ENCODE measurements at regions of chr15 and their contacts with region 1.

Region 1: GRCh38 chr15:68875377-68876116 is 54.8 kb upstream of the SPESP1 start:
- DNase-seq: peak; percentile 90 to 93 (median 93)
- ATAC-seq: peak; percentile 93 to 97 (median 97)
- H3K4me3 ChIP-seq: peak overlapping the region; percentile 35 to 51 (median 39)
- H3K27ac ChIP-seq: no peak overlapping the region
- H3K4me1 ChIP-seq: peaks cover 0 to 5% (median 0%) of the 10 kb centered on the region in 4 donors
- H3K27me3 ChIP-seq: no peaks in the 10 kb centered on the region
- CTCF ChIP-seq: peak; percentile 75 to 92 (median 88)
- POLR2A ChIP-seq: no peak

Region 2: GRCh38 chr15:68328443-68328842 is 547.1 kb before region 1 on chr15:
- intact Hi-C with region 1: no loop called
- DNase-seq: no peak
- ATAC-seq: no peak
- H3K4me3 ChIP-seq: no peak overlapping the region
- H3K27ac ChIP-seq: no peak overlapping the region
- H3K4me1 ChIP-seq: no peaks in the 10 kb centered on the region
- H3K27me3 ChIP-seq: no peaks in the 10 kb centered on the region
- CTCF ChIP-seq: no peak
- POLR2A ChIP-seq: no peak

Region 3: GRCh38 chr15:68559345-68560310 is 315.9 kb before region 1 on chr15:
- intact Hi-C with region 1: loop called in 1 of 2 experiments (anchors 5 kb)
- DNase-seq: peak; percentile 80 to 83 (median 82)
- ATAC-seq: peak; percentile 95 to 98 (median 98)
- H3K4me3 ChIP-seq: peak overlapping the region in 2 of 3 donors; percentile 2 to 28
- H3K27ac ChIP-seq: no peak overlapping the region
- H3K4me1 ChIP-seq: peaks cover 0 to 7% (median 1%) of the 10 kb centered on the region in 4 donors
- H3K27me3 ChIP-seq: no peaks in the 10 kb centered on the region
- CTCF ChIP-seq: peak; percentile 90 to 98 (median 96)
- POLR2A ChIP-seq: no peak

Region 4: GRCh38 chr15:68719672-68720071 is 155.9 kb before region 1 on chr15:
- intact Hi-C with region 1: loop called (anchors 10 kb)
- DNase-seq: no peak
- ATAC-seq: no peak
- H3K4me3 ChIP-seq: no peak overlapping the region
- H3K27ac ChIP-seq: no peak overlapping the region
- H3K4me1 ChIP-seq: no peaks in the 10 kb centered on the region
- H3K27me3 ChIP-seq: no peaks in the 10 kb centered on the region
- CTCF ChIP-seq: no peak
- POLR2A ChIP-seq: no peak

Region 5: DNA sequence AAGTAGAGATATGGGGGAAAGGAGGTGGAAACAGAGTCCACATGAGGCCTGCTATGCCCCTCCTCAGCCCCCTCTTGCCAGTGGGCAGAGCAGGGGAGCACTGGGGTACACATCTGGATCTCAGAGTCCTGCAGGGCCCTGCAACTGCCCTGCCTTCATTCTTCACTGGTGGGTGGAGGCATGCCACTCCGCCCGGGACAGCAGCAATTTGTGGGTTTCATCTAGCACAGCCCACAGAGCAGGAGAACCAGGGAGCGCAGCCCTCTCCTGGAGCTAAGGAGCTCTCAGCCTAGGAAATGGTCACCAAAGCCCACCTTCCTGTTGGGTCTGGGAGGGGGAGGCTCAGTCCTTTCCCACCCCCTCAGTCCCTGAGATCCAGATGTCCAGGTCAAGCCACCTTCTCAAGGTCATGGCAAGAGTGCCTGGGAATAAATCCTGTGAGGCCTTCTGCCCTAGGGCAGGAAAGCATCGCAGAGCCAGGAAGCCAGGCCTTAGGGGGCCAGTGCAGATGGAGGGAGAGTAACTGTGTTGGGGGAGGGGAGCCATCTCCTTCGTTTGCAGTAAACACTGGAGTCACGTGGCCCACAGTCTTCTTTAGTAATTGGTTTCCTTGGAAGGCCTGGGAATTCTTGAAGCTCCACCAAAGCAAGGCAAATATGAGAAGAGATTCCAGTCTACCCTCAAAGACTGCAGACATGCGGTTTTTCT is 85.9 kb before region 1 on chr15:
- intact Hi-C with region 1: loop called in 1 of 2 experiments (anchors 5 kb)
- DNase-seq: no peak
- ATAC-seq: peak; percentile 8 to 24 (median 14)
- H3K4me3 ChIP-seq: no peak overlapping the region
- H3K27ac ChIP-seq: peak overlapping the region in 1 of 3 donors; percentile 33
- H3K4me1 ChIP-seq: peaks cover 0 to 45% (median 20%) of the 10 kb centered on the region in 4 donors
- H3K27me3 ChIP-seq: no peaks in the 10 kb centered on the region
- CTCF ChIP-seq: no peak
- POLR2A ChIP-seq: no peak